ENCODE measurements at regions of chr12 and their contacts with region 1.

Region 1: GRCh38 chr12:7907009-7907408 is 29.0 kb downstream of the SLC2A3 start:
- DNase-seq: peak; percentile 75
- H3K4me3 ChIP-seq: no peak overlapping the region
- H3K27ac ChIP-seq: no peak overlapping the region
- H3K4me1 ChIP-seq: peaks cover 6% of the 10 kb centered on the region
- H3K27me3 ChIP-seq: peaks cover 0 to 10% of the 10 kb centered on the region in 2 experiments
- CTCF ChIP-seq: peak; percentile 45 to 55
- POLR2A ChIP-seq: no peak

Region 2: GRCh38 chr12:7678738-7679137 is 228.3 kb before region 1 on chr12:
- CTCF ChIA-PET with region 1: no interaction called
- POLR2A ChIA-PET with region 1: no interaction called
- dilution Hi-C with region 1: no loop called
- intact Hi-C with region 1: loop called (anchors 1 kb)
- DNase-seq: peak; percentile 23
- H3K4me3 ChIP-seq: no peak overlapping the region
- H3K27ac ChIP-seq: no peak overlapping the region
- H3K4me1 ChIP-seq: peaks cover 3% of the 10 kb centered on the region
- H3K27me3 ChIP-seq: peaks cover 0 to 6% of the 10 kb centered on the region in 2 experiments
- CTCF ChIP-seq: no peak
- POLR2A ChIP-seq: no peak

Region 3: DNA sequence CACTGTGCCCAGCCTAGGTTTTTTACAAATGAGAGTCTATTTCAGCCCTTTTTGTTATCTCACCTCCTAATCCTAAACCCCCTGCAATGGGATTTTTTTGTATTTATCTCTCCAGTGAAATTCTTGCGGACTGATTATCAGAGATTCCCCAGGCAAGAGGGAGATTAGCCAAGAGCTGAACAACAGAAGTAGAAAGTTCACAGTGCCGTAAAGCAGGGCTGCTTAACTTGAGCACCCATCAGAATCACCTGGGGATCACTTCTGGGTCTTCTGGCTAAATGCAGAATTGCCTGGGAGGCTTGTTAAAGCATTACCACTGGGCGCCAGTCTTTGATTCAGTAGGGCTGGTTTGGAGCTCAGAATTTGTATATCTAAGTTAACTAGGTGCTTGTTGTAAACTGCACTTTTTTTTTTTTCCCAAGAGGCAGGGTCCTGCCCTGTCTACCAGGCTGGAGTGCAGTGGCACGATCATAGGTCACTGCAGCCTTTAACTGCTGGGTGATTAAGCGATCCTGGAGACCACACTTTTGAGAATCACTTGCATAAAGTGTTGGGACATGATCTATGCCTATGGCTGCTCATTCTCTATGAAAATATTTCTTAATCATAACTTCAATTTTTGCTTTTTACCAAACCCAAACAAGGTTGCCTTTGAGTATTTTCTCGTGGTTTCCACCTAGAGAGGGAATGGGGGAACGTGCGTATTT is 196.9 kb before region 1 on chr12:
- CTCF ChIA-PET with region 1: no interaction called
- POLR2A ChIA-PET with region 1: no interaction called
- dilution Hi-C with region 1: no loop called
- intact Hi-C with region 1: no loop called
- DNase-seq: no peak
- H3K4me3 ChIP-seq: no peak overlapping the region
- H3K27ac ChIP-seq: no peak overlapping the region
- H3K4me1 ChIP-seq: no peaks in the 10 kb centered on the region
- H3K27me3 ChIP-seq: peaks cover 0 to 2% of the 10 kb centered on the region in 2 experiments
- CTCF ChIP-seq: no peak
- POLR2A ChIP-seq: no peak

Region 4: GRCh38 chr12:7797698-7798398 is 109.2 kb before region 1 on chr12:
- CTCF ChIA-PET with region 1: interaction called, 10 read pairs
- POLR2A ChIA-PET with region 1: interaction called, 3 read pairs
- dilution Hi-C with region 1: no loop called
- intact Hi-C with region 1: no loop called
- DNase-seq: no peak
- H3K4me3 ChIP-seq: no peak overlapping the region
- H3K27ac ChIP-seq: no peak overlapping the region
- H3K4me1 ChIP-seq: no peaks in the 10 kb centered on the region
- H3K27me3 ChIP-seq: no peaks in the 10 kb centered on the region
- CTCF ChIP-seq: no peak
- POLR2A ChIP-seq: no peak

Region 5: DNA sequence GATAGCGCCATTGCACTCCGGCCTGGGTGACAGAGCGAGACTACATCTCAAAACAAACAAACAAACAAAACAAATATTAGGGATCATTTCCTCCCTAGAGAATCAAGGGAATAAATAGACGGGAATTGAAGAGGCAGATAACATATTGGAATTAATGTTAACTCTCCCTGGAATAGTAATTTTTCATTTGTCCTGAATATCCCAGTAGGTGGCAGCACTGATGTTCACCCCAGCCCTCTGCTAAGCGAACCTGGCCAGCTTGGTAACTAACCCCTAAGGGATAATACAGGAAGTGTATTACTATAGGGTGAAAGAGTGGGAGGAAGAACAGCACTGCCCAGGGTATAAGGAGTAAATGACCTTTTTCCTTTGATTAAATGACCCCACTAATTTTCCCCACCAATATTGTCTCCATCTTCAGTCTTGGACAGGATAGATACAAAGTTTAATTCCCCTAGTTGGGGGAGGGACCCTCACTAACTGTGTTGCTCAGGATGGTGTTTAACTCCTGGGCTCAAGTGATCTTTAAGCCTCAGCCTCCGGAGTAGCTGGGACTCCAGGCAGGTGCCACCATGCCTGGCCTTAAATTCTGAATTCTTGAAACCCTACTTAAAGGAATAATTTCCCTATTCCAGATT is 74.8 kb before region 1 on chr12:
- CTCF ChIA-PET with region 1: interaction called, 13 read pairs
- POLR2A ChIA-PET with region 1: no interaction called
- dilution Hi-C with region 1: no loop called
- intact Hi-C with region 1: loop called (anchors 2 kb)
- DNase-seq: peak; percentile 58
- H3K4me3 ChIP-seq: no peak overlapping the region
- H3K27ac ChIP-seq: no peak overlapping the region
- H3K4me1 ChIP-seq: no peaks in the 10 kb centered on the region
- H3K27me3 ChIP-seq: peaks cover 0 to 2% of the 10 kb centered on the region in 2 experiments
- CTCF ChIP-seq: peak; percentile 44 to 45
- POLR2A ChIP-seq: no peak

Region 6: DNA sequence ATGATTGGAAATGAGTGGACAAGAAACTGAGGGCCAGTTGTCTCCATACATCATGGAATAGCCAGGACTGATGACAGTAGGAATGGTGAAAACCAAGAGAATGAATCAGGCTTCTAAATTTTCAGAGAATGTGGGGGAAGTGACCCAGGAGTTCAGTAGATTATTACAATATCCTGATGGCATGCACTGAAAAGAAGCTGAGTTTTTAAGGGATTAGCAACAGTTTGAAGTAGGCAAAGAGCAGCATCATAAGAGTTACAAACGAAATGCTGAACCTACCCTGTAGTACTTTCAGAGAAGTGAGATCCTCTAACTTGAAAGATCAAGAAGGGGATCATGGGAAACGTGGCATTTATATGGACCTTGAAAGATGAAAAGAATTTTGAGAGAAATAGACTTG is 47.5 kb before region 1 on chr12:
- CTCF ChIA-PET with region 1: interaction called, 10 read pairs
- POLR2A ChIA-PET with region 1: no interaction called
- dilution Hi-C with region 1: no loop called
- intact Hi-C with region 1: loop called (anchors 1 kb)
- DNase-seq: no peak
- H3K4me3 ChIP-seq: no peak overlapping the region
- H3K27ac ChIP-seq: no peak overlapping the region
- H3K4me1 ChIP-seq: no peaks in the 10 kb centered on the region
- H3K27me3 ChIP-seq: no peaks in the 10 kb centered on the region
- CTCF ChIP-seq: no peak
- POLR2A ChIP-seq: no peak

Region 7: GRCh38 chr12:7989827-7990551 is 83.0 kb after region 1 on chr12:
- CTCF ChIA-PET with region 1: no interaction called
- POLR2A ChIA-PET with region 1: no interaction called
- dilution Hi-C with region 1: no loop called
- intact Hi-C with region 1: loop called (anchors 1 kb)
- DNase-seq: peak; percentile 73
- H3K4me3 ChIP-seq: no peak overlapping the region
- H3K27ac ChIP-seq: no peak overlapping the region
- H3K4me1 ChIP-seq: peaks cover 11% of the 10 kb centered on the region
- H3K27me3 ChIP-seq: no peaks in the 10 kb centered on the region
- CTCF ChIP-seq: no peak
- POLR2A ChIP-seq: no peak